CD8-positive, alpha-beta memory T cell (primary cell): ENCODE measurements at regions of chr3 and their contacts with region 1.

Region 1: DNA sequence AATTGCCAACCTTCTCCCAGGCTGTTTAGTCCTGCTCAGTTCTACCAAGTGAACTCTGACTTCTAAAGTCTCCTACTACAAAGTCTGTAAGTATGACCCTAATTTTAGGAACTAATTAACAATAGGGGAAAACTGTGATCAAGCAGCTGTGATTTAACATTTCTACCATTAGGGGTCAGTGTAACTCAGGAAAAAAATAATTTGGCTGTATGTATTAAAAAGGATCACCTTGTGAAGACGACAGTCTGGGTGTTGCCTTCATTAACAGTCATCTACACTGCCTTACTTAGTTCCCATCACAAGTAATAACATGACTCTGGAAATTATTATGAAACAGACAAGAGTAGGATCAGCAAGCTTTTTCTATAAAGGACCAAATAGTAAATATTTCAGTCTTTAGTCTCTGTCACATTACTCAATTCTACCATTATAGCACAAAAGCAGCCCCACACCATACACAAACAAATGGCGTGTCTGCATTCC is 4.2 kb upstream of the NPHP3 start:
- DNase-seq: peak in 2 of 5 donors; percentile 52 to 55
- H3K4me3 ChIP-seq: no peak overlapping the region
- H3K4me3 Mint-ChIP-seq: peak overlapping the region in 1 of 7 donors; percentile 75
- H3K27ac ChIP-seq: no peak overlapping the region
- H3K27ac Mint-ChIP-seq: peak overlapping the region in 1 of 8 donors; percentile 4
- H3K4me1 ChIP-seq: peaks cover 8% of the 10 kb centered on the region
- H3K4me1 Mint-ChIP-seq: peaks cover 11 to 13% (median 11%) of the 10 kb centered on the region in 3 donors
- H3K27me3 ChIP-seq: peaks cover 7% of the 10 kb centered on the region
- H3K27me3 Mint-ChIP-seq: peaks cover 10 to 30% of the 10 kb centered on the region in 2 donors

Region 2: DNA sequence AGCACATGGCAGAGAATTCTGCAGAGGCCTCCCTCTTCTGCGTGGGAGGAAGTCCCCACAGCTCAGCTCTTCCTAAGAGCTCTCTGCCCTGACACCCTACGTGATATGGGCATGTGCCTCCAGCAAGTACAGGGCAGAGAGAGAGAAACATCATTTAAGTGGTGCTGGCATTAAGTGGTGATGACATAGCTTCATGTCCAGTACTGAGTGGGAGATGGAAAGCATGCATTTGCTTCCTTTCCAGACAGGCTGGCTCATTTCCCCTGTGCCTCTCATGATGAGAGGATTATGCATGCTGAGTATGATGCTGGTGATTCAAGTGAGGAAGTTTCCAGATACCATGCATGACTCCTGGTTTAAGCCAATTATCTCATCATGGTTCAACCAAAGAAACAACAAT is 700.3 kb after region 1 on chr3:
- CTCF ChIA-PET with region 1: interaction called, 31 read pairs
- POLR2A ChIA-PET with region 1: no interaction called
- DNase-seq: no peak
- H3K4me3 ChIP-seq: no peak overlapping the region
- H3K4me3 Mint-ChIP-seq: no peak overlapping the region
- H3K27ac ChIP-seq: no peak overlapping the region
- H3K27ac Mint-ChIP-seq: no peak overlapping the region
- H3K4me1 ChIP-seq: no peaks in the 10 kb centered on the region
- H3K4me1 Mint-ChIP-seq: peaks cover 2 to 4% (median 4%) of the 10 kb centered on the region in 3 donors
- H3K27me3 ChIP-seq: no peaks in the 10 kb centered on the region
- H3K27me3 Mint-ChIP-seq: peaks cover 0 to 4% of the 10 kb centered on the region in 2 donors